HepG2 (cell line): ENCODE measurements at regions of chr22 and their contacts with region 1.

Region 1: DNA sequence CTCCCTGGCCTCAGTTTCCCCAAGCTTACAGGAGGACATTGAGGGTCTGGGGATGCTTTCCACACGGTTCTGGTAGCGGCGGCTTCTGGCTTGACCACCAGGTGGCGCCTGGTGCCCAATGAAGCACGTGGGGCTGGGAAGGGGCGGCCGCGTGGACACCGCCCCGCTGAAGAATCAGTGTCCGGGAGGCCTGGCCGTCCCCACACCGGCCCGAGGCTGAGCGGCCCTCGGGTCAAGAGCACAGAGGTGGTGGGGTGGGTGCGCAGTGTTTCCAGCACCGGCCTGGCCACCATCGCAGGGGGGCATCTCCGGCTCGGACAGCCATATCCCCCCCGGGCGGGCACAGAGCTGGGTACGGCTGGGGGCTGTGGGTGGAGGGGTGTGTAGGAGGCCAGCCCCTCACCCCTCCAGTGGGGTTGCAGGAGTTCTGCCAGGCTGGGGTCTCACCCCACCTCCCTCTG is 27.8 kb upstream of the PPARA start:
- DNase-seq: peak; percentile 37
- ATAC-seq: peak; percentile 63
- H3K4me3 ChIP-seq: peak overlapping the region in 1 of 3 experiments; percentile 41; a peak in 1 of 6 replicates
- H3K27ac ChIP-seq: no peak overlapping the region
- H3K4me1 ChIP-seq: peaks cover 50% of the 10 kb centered on the region
- H3K27me3 ChIP-seq: peaks cover 11 to 58% of the 10 kb centered on the region in 2 experiments; a peak in 4 of 5 replicates
- CTCF ChIP-seq: peak; percentile 98
- EP300 ChIP-seq: no peak
- POLR2A ChIP-seq: no peak
- RAD21 ChIP-seq: peak; percentile 92

Region 2: DNA sequence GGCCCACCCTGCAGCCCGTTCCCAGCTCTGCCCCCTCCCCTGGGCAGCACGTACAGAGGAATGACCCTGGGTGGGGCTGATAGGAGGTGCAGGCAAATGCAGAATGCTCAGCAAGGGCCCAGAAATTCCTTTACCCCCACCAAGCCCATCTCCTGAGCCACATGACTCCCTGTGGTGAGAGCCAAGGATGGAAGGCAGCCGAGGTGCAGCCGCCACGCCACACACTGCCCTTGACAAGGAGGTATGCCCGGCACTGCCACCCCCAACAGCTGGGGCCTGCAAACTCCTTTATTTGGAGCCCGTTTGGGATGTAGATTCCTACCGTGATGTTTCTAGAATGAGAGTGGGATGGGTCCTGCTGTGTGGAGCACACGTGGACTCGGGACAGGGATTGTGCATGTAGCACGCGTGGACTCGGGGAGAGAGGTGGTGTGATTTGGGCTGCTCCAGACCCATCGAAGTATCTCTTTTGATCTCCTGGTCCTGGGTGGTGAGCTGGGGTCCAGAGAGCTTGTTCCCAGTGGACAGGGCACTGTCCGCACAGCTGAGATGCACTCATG is 187.1 kb after region 1 on chr22:
- CTCF ChIA-PET with region 1: interaction called, 37 read pairs
- POLR2A ChIA-PET with region 1: no interaction called
- in situ Hi-C with region 1: loop called (anchors 5 kb)
- intact Hi-C with region 1: loop called (anchors 1 kb)
- DNase-seq: no peak
- ATAC-seq: no peak
- H3K4me3 ChIP-seq: no peak overlapping the region
- H3K27ac ChIP-seq: no peak overlapping the region
- H3K4me1 ChIP-seq: no peaks in the 10 kb centered on the region
- H3K27me3 ChIP-seq: no peaks in the 10 kb centered on the region
- CTCF ChIP-seq: no peak
- EP300 ChIP-seq: no peak
- POLR2A ChIP-seq: no peak
- RAD21 ChIP-seq: no peak

Region 3: GRCh38 chr22:46315976-46316375 is 193.4 kb after region 1 on chr22:
- CTCF ChIA-PET with region 1: interaction called, 37 read pairs
- POLR2A ChIA-PET with region 1: no interaction called
- in situ Hi-C with region 1: loop called (anchors 5 kb)
- intact Hi-C with region 1: loop called (anchors 1 kb)
- DNase-seq: no peak
- ATAC-seq: no peak
- H3K4me3 ChIP-seq: no peak overlapping the region
- H3K27ac ChIP-seq: no peak overlapping the region
- H3K4me1 ChIP-seq: no peaks in the 10 kb centered on the region
- H3K27me3 ChIP-seq: no peaks in the 10 kb centered on the region
- CTCF ChIP-seq: no peak
- EP300 ChIP-seq: no peak
- POLR2A ChIP-seq: no peak
- RAD21 ChIP-seq: no peak